ENCODE measurements at regions of chr12 and their contacts with region 1.

Region 1: DNA sequence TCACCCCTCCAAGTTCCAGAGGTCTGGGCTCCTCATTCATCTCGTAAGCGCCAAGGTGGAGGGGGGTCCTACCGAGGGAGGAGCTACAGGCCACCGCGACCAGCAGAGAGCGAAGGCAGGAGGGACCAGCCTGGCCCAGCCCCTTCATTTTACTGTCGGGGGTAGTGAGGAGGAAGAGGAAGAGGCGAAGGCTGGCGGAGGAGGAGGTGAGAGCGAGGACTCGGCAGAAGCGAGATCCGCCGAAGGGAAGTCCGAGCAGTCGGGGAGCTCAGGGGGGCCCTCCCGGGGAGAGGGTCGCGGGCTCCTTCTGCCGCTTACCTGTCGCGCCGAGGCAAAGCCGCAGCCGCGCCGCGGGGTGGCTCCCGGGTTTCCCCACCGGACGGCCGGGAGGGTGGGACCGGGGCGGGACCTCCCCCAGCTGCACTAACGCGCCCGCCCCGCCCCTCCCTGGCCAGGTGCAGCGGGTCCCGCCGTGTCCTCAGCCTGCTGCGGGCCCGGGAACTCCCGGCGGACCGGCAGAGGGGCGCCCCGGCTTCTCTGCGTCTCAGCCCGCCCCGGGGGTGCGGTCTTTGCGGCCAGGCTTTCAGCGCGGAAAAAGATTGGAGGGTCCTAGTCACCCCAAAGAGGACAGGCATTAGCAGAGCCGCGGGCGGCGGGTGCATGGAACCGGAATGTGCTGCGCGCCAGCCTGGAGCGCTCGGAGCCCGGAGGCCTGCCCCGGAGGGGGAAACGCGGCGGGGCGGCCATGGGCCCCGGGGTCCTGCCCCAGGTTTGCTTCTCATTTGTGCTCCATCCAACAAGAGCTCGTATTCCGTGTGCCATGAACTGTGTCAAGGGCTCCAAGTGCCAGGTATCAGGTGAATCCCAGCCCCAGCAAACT is at the start of gene GALNT6:
- DNase-seq: peak; percentile 81
- ATAC-seq: peak; percentile 73
- H3K4me3 Mint-ChIP-seq: peak within 1 kb of the TSS; percentile 90
- H3K27ac Mint-ChIP-seq: peak within 1 kb of the TSS; percentile 88
- H3K4me1 Mint-ChIP-seq: peaks cover 66% of the 10 kb centered on the region
- H3K27me3 Mint-ChIP-seq: no peaks in the 10 kb centered on the region
- total RNA-seq, gene GALNT6: 43.9 to 47.9 TPM

Region 2: GRCh38 chr12:51368640-51369517 is 22.6 kb before region 1 on chr12:
- CTCF ChIA-PET with region 1: interaction called, 12 read pairs
- DNase-seq: peak; percentile 97
- ATAC-seq: peak; percentile 98
- H3K4me3 Mint-ChIP-seq: peak overlapping the region; percentile 28
- H3K27ac Mint-ChIP-seq: peak overlapping the region; percentile 83
- H3K4me1 Mint-ChIP-seq: peaks cover 58% of the 10 kb centered on the region
- H3K27me3 Mint-ChIP-seq: no peaks in the 10 kb centered on the region

Region 3: GRCh38 chr12:51424662-51425438 is 33.3 kb after region 1 on chr12 and contains the start of gene SLC4A8:
- CTCF ChIA-PET with region 1: interaction called, 19 read pairs
- DNase-seq: peak; percentile 91
- ATAC-seq: peak; percentile 94
- H3K4me3 Mint-ChIP-seq: peak within 1 kb of the TSS; percentile 76
- H3K27ac Mint-ChIP-seq: peak within 1 kb of the TSS; percentile 30
- H3K4me1 Mint-ChIP-seq: peaks cover 14% of the 10 kb centered on the region
- H3K27me3 Mint-ChIP-seq: peaks cover 6% of the 10 kb centered on the region
- total RNA-seq, gene SLC4A8: 9.1 to 9.2 TPM